Heart right ventricle (tissue), 16 donors: ENCODE measurements at regions of chr11 and their contacts with region 1.

Region 1: DNA sequence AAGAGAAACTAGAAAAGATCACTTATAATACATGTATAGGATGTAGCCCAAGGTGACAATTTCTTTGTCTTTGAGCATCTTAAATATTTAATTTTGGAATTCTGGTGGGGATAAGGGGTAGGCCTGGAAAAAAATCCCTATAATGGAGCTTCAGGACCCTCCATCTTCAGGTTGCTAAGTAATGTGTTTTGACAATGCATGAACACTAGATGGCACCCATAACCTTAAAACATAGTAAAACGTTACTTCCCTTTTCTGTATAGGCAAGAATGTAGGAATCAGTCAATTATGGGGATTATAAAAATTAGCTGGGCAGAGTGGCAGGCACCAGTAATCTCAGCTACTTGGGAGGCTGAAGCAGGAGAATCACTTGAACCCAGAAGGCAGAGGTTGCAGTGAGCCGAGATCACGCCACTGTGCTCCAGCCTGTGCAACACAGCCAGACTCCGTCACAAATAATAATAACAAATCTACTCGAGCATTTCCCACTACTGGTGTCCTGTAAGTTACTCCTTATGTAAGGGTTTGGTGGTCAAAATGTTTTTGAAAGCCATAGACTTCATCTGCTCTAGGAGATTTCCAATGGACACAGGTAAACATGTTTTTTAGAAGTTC is 541.9 kb upstream of the CCDC90B start:
- DNase-seq: no peak
- ATAC-seq: peak in 2 of 8 donors; percentile 30 to 54
- H3K4me3 ChIP-seq: peak overlapping the region in 5 of 10 donors; percentile 8 to 35 (median 30)
- H3K27ac ChIP-seq: no peak overlapping the region
- H3K4me1 ChIP-seq: no peaks in the 10 kb centered on the region
- H3K27me3 ChIP-seq: no peaks in the 10 kb centered on the region
- CTCF ChIP-seq: peak in 7 of 9 donors; percentile 45 to 63 (median 58)

Region 2: DNA sequence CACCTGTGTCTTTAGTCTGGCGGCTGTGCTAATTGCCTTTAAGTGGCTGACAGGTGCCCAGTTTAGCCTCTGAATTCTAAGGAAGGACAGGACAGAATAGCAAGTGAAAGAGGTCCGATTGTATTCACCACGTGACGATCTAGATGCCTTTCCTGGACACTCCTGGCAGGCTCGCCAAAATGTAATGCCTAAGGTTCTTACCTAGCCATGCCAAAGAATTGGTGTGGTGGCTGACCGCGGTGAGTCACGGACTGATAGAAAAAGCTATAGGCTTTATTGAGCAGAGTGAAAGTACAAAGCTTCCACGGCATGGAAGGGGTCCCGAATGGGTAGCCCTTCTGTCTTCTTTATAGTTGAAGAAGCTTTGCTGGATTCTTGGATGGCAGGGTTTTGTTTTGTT is 607.8 kb before region 1 on chr11:
- intact Hi-C with region 1: loop called in 1 of 10 experiments (anchors 10 kb)
- DNase-seq: no peak
- ATAC-seq: no peak
- H3K4me3 ChIP-seq: no peak overlapping the region
- H3K27ac ChIP-seq: no peak overlapping the region
- H3K4me1 ChIP-seq: no peaks in the 10 kb centered on the region
- H3K27me3 ChIP-seq: no peaks in the 10 kb centered on the region
- CTCF ChIP-seq: no peak

Region 3: GRCh38 chr11:83235825-83236224 is 592.2 kb before region 1 on chr11:
- intact Hi-C with region 1: loop called in 2 of 10 experiments (anchors 5 to 10 kb)
- DNase-seq: no peak
- ATAC-seq: no peak
- H3K4me3 ChIP-seq: no peak overlapping the region
- H3K27ac ChIP-seq: no peak overlapping the region
- H3K4me1 ChIP-seq: peaks cover 0 to 8% (median 0%) of the 10 kb centered on the region in 9 donors
- H3K27me3 ChIP-seq: no peaks in the 10 kb centered on the region
- CTCF ChIP-seq: no peak

Region 4: DNA sequence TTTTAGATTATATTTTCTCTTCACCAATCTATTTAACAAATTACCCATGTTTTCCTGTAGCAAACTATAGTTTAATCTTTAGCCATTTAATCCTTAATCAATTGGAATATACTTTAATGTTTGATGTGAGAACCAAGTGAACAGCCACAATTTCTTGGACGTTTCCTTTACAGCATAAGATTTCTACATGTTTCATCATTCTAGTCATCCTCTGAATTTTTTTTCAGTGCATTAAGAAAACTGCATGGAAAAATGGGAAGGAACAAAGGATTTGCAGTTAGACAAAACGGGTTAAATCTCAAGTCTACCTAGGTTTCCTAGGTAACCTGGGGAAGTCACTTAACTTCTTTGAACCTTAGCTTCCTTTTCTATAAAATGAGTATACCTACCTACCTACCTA is 34.7 kb before region 1 on chr11:
- intact Hi-C with region 1: no loop called
- DNase-seq: no peak
- ATAC-seq: no peak
- H3K4me3 ChIP-seq: no peak overlapping the region
- H3K27ac ChIP-seq: no peak overlapping the region
- H3K4me1 ChIP-seq: no peaks in the 10 kb centered on the region
- H3K27me3 ChIP-seq: no peaks in the 10 kb centered on the region
- CTCF ChIP-seq: no peak